HAP-1 (cell line): ENCODE measurements at regions of chr13 and their contacts with region 1.

Region 1: GRCh38 chr13:38045307-38046048 is 175.9 kb upstream of the TRPC4 start:
- DNase-seq: peak; percentile 59 to 67
- H3K4me3 ChIP-seq: no peak overlapping the region
- H3K4me1 ChIP-seq: no peaks in the 10 kb centered on the region
- H3K27me3 ChIP-seq: no peaks in the 10 kb centered on the region

Region 2: GRCh38 chr13:37755349-37755748 is 290.1 kb before region 1 on chr13:
- in situ Hi-C with region 1: no loop called
- DNase-seq: no peak
- H3K4me3 ChIP-seq: no peak overlapping the region
- H3K4me1 ChIP-seq: no peaks in the 10 kb centered on the region
- H3K27me3 ChIP-seq: no peaks in the 10 kb centered on the region

Region 3: DNA sequence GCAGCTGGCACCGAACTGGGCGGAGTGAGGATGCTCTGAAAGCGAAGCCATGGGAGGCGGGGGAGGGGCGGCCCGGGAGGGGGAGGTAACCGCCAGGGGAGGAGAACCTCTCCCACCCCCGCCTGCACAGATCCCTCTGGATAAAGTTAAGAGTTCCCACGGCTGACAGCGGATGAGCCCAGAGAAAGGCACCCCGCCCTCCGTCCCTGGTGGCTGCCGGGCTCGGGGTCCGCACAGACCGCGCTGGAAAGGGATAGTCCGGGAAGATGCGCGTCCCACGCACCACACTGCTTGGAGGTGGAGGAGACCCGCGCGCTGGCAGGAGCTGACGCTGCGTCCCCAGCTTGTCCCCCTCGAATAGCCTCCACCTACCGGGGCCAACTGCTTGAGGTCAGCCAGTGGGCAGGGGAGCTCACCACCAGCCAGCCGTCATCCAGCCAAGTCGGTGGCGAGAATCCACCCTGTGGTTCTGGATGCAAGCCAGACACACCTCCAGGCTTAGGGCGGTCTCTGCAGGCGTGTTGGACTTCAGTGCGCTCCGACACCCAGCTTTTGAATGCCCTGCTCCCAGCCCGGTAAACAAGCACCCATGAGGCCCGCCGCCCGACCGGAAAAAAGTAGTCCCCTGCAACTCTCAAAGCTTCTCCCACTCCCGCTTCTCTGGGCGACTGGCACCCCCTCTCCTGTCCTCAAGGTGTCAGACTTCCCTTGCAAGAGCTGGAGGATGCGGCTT is 175.6 kb before region 1 on chr13 and contains the start of gene TRPC4:
- in situ Hi-C with region 1: loop called (anchors 10 kb)
- DNase-seq: peak; percentile 49 to 81
- H3K4me3 ChIP-seq: peak within 1 kb of the TSS; percentile 39
- H3K4me1 ChIP-seq: 0 out of 2 replicates have a peak, but pooled peaks cover 2% of the 10 kb centered on the region
- H3K27me3 ChIP-seq: no peaks in the 10 kb centered on the region

Region 4: GRCh38 chr13:38530492-38530891 is 485.0 kb after region 1 on chr13:
- in situ Hi-C with region 1: no loop called
- DNase-seq: no peak
- H3K4me3 ChIP-seq: no peak overlapping the region
- H3K4me1 ChIP-seq: no peaks in the 10 kb centered on the region
- H3K27me3 ChIP-seq: no peaks in the 10 kb centered on the region

Region 5: DNA sequence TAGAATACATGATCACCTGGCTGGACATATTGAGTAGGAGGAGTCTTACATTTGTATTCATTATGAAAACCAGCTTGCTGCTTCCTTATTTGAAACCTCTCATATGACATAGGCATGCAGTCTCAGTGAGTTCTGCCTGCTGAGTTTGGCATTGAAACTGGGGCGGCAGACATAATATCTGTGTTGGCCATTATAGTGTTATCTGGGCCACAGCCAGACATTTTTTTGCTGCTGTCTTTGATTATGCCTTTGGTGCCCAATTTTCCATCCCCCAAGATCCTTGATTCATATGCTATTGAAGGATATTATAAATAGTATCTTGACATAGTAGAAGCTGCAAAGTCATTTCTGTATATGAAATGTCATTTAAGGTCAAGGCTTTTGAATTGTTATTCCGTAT is 657.2 kb after region 1 on chr13:
- in situ Hi-C with region 1: no loop called
- DNase-seq: no peak
- H3K4me3 ChIP-seq: no peak overlapping the region
- H3K4me1 ChIP-seq: peaks cover 33% of the 10 kb centered on the region
- H3K27me3 ChIP-seq: no peaks in the 10 kb centered on the region